ENCODE measurements at regions of chr7 and their contacts with region 1.

Region 1: GRCh38 chr7:141864775-141865447 is 23.6 kb upstream of the PRSS37 start:
- DNase-seq: no peak
- H3K4me3 Mint-ChIP-seq: peak overlapping the region; percentile 9
- H3K27ac Mint-ChIP-seq: peak overlapping the region; percentile 82
- H3K4me1 Mint-ChIP-seq: peaks cover 13% of the 10 kb centered on the region
- H3K27me3 Mint-ChIP-seq: no peaks in the 10 kb centered on the region
- CTCF ChIP-seq: no peak

Region 2: GRCh38 chr7:141844256-141844655 is 20.7 kb before region 1 on chr7:
- CTCF ChIA-PET with region 1: no interaction called
- intact Hi-C with region 1: no loop called
- DNase-seq: no peak
- H3K4me3 Mint-ChIP-seq: no peak overlapping the region
- H3K27ac Mint-ChIP-seq: no peak overlapping the region
- H3K4me1 Mint-ChIP-seq: peaks cover 10% of the 10 kb centered on the region
- H3K27me3 Mint-ChIP-seq: no peaks in the 10 kb centered on the region
- CTCF ChIP-seq: no peak

Region 3: GRCh38 chr7:141915565-141915964 is 50.7 kb after region 1 on chr7:
- CTCF ChIA-PET with region 1: no interaction called
- intact Hi-C with region 1: loop called (anchors 2 kb)
- DNase-seq: peak; percentile 69
- H3K4me3 Mint-ChIP-seq: no peak overlapping the region
- H3K27ac Mint-ChIP-seq: peak overlapping the region; percentile 4
- H3K4me1 Mint-ChIP-seq: peaks cover 16% of the 10 kb centered on the region
- H3K27me3 Mint-ChIP-seq: peaks cover 14% of the 10 kb centered on the region
- CTCF ChIP-seq: no peak

Region 4: GRCh38 chr7:142111499-142111898 is 246.6 kb after region 1 on chr7 and contains the start of gene MGAM2:
- CTCF ChIA-PET with region 1: no interaction called
- intact Hi-C with region 1: loop called (anchors 10 kb)
- DNase-seq: peak; percentile 55
- H3K4me3 Mint-ChIP-seq: peak within 1 kb of the TSS; percentile 91
- H3K27ac Mint-ChIP-seq: peak within 1 kb of the TSS; percentile 88
- H3K4me1 Mint-ChIP-seq: peaks cover 82% of the 10 kb centered on the region
- H3K27me3 Mint-ChIP-seq: no peaks in the 10 kb centered on the region
- CTCF ChIP-seq: no peak
- total RNA-seq, gene MGAM2: 69.5 and 124 TPM in 2 replicates